ENCODE measurements at regions of chr9 and their contacts with region 1.

Region 1: DNA sequence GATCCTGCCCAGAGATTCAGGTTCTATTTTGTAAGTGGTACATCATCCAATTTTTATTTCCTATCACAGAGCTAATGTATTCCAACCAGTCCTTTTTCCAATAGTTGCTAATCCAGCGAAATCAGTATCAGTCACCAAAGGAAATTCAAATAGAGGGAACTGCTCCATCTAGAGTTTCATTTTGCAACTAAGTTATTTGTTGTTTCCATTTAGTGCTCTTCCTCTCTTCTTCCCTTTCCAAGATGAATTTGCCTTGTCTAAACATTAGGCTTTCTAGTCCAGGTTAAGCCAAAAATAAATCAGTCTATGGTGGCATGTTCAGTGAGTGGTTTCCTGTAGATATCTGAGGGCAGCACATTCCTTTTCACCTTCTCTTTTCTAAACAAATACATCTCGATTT is 79.8 kb upstream of the SPATA31D4 start:
- DNase-seq: peak; percentile 66
- ATAC-seq: peak; percentile 75
- H3K4me3 ChIP-seq: no peak overlapping the region
- H3K27ac ChIP-seq: no peak overlapping the region
- H3K4me1 ChIP-seq: no peaks in the 10 kb centered on the region; the same call in 1 of the 2 replicates
- H3K27me3 ChIP-seq: no peaks in the 10 kb centered on the region
- CTCF ChIP-seq: peak; percentile 63
- POLR2A ChIP-seq: no peak
- RAD21 ChIP-seq: peak; percentile 60

Region 2: GRCh38 chr9:80605129-80605528 is 1243.3 kb before region 1 on chr9:
- CTCF ChIA-PET with region 1: no interaction called
- POLR2A ChIA-PET with region 1: no interaction called
- dilution Hi-C with region 1: no loop called
- in situ Hi-C with region 1: no loop called
- intact Hi-C with region 1: loop called (anchors 10 kb)
- DNase-seq: peak; percentile 66
- ATAC-seq: 0 out of 2 replicates have a peak, but pooled peaks have one; percentile 51
- H3K4me3 ChIP-seq: no peak overlapping the region
- H3K27ac ChIP-seq: no peak overlapping the region
- H3K4me1 ChIP-seq: no peaks in the 10 kb centered on the region
- H3K27me3 ChIP-seq: no peaks in the 10 kb centered on the region
- CTCF ChIP-seq: peak; percentile 53
- POLR2A ChIP-seq: no peak
- RAD21 ChIP-seq: peak; percentile 67

Region 3: DNA sequence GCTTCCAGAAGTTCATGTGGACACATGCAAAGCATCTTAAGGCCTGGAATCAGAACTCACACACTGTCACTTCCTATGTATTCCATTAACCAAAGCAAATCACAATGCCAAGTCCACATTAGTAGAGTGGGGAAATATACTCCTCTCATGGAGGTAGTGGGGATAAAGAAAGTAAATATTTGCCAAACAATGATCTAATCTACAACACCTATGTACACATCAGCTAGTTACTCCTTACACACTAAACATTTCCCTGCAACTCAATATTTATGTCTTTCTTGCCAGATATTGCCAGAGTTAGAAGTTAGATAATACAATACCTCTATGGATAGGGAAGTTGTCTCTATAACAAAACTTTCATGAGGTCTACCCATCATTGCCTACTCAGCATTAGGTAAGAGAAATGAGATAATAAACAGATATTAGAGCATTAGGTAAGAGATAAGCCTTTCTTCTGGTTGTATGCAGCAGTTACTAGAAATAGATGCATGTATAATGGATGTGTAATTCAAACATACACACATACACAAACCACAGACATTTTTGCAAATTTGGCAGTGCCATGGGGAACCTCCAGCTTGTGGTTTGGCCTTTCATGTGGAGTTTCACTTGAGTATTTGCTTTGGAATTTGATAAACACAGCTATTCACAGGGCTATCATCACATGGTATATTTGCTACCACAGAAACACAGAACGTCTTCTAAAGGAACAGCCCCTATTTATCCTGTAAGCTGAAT is 355.6 kb before region 1 on chr9:
- CTCF ChIA-PET with region 1: no interaction called
- POLR2A ChIA-PET with region 1: no interaction called
- dilution Hi-C with region 1: no loop called
- in situ Hi-C with region 1: no loop called
- intact Hi-C with region 1: loop called (anchors 1 kb)
- DNase-seq: peak; percentile 100
- ATAC-seq: peak; percentile 92
- H3K4me3 ChIP-seq: no peak overlapping the region
- H3K27ac ChIP-seq: no peak overlapping the region
- H3K4me1 ChIP-seq: peaks cover 7% of the 10 kb centered on the region
- H3K27me3 ChIP-seq: no peaks in the 10 kb centered on the region; the same call in none of the 2 replicates
- CTCF ChIP-seq: no peak
- POLR2A ChIP-seq: no peak
- RAD21 ChIP-seq: no peak

Region 4: GRCh38 chr9:81529556-81530195 is 318.8 kb before region 1 on chr9:
- CTCF ChIA-PET with region 1: no interaction called
- POLR2A ChIA-PET with region 1: interaction called, 5 read pairs
- dilution Hi-C with region 1: no loop called
- in situ Hi-C with region 1: no loop called
- intact Hi-C with region 1: loop called (anchors 10 kb)
- DNase-seq: peak; percentile 58
- ATAC-seq: no peak
- H3K4me3 ChIP-seq: no peak overlapping the region
- H3K27ac ChIP-seq: no peak overlapping the region
- H3K4me1 ChIP-seq: peaks cover 2% of the 10 kb centered on the region; the same call in 1 of the 2 replicates
- H3K27me3 ChIP-seq: no peaks in the 10 kb centered on the region
- CTCF ChIP-seq: no peak
- POLR2A ChIP-seq: no peak
- RAD21 ChIP-seq: no peak

Region 5: DNA sequence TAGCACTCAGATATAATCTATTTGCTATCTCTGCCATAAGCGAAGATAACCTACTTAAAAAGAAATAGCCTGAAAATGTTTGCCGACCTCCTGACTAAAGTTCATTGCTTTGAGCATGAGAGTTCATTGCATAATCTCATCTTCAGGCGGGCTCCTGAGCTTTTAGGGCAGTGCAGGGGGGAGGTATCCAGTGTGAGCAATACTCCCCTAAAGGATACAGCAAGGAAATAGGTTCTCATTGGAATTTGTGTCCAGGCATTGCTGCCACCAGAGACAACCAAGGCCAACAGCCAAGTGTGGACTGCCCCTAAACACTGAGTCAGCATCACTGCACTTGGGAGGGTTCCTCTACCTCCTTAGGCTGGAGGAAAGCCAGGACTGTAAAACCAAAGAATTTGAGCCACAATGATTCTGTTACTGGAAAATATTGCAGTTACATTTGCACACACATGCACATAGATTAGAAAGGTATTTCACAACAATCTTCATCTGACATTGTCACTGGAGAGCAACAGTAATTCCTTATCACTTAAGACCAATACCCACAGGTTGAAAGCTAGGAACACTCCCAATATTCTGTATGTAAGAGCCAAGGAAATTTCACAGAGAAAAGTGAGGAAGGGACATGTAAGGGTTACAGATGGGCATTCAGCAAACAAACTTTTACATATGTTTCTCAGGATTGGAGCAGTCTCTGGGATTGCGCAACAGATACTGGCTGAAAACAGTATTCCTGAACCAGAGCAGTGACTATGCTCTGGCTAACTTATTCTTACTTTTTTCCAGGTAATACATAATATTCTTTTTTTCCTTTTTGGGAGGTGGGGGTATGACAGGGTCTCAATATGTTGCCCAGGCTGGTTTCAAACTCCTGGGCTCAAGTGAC is 60.5 kb before region 1 on chr9:
- CTCF ChIA-PET with region 1: no interaction called
- POLR2A ChIA-PET with region 1: no interaction called
- dilution Hi-C with region 1: no loop called
- in situ Hi-C with region 1: no loop called
- intact Hi-C with region 1: loop called (anchors 2 kb)
- DNase-seq: peak; percentile 87
- ATAC-seq: peak; percentile 91
- H3K4me3 ChIP-seq: no peak overlapping the region
- H3K27ac ChIP-seq: peak overlapping the region; percentile 2; the same call in 1 of the 2 replicates
- H3K4me1 ChIP-seq: peaks cover 2% of the 10 kb centered on the region
- H3K27me3 ChIP-seq: no peaks in the 10 kb centered on the region
- CTCF ChIP-seq: no peak
- POLR2A ChIP-seq: no peak
- RAD21 ChIP-seq: no peak

Region 6: GRCh38 chr9:83012922-83013838 is 1164.7 kb after region 1 on chr9:
- CTCF ChIA-PET with region 1: no interaction called
- POLR2A ChIA-PET with region 1: no interaction called
- dilution Hi-C with region 1: no loop called
- in situ Hi-C with region 1: no loop called
- intact Hi-C with region 1: no loop called
- DNase-seq: peak; percentile 83
- ATAC-seq: peak; percentile 43
- H3K4me3 ChIP-seq: no peak overlapping the region
- H3K27ac ChIP-seq: peak overlapping the region; percentile 31; the same call in 1 of the 2 replicates
- H3K4me1 ChIP-seq: peaks cover 7% of the 10 kb centered on the region
- H3K27me3 ChIP-seq: no peaks in the 10 kb centered on the region
- CTCF ChIP-seq: no peak
- POLR2A ChIP-seq: no peak
- RAD21 ChIP-seq: no peak

Measured in IMR-90 (cell line).